Naive thymus-derived CD4-positive, alpha-beta T cell (primary cell): ENCODE measurements at regions of chr14 and their contacts with region 1.

Region 1: GRCh38 chr14:69715725-69716477 is 51.0 kb upstream of the SRSF5 start:
- DNase-seq: no peak
- ATAC-seq: peak; percentile 29
- H3K4me3 ChIP-seq: no peak overlapping the region
- H3K4me3 Mint-ChIP-seq: peak overlapping the region in 2 of 10 donors; percentile 18 to 72
- H3K27ac ChIP-seq: no peak overlapping the region
- H3K27ac Mint-ChIP-seq: peak overlapping the region in 8 of 9 donors; percentile 9 to 88 (median 50)
- H3K4me1 ChIP-seq: peaks cover 12 to 14% of the 10 kb centered on the region in 2 donors
- H3K4me1 Mint-ChIP-seq: peaks cover 27 to 80% (median 37%) of the 10 kb centered on the region in 7 donors
- H3K27me3 ChIP-seq: no peaks in the 10 kb centered on the region
- H3K27me3 Mint-ChIP-seq: no peaks in the 10 kb centered on the region

Region 2: GRCh38 chr14:69685716-69686115 is 30.2 kb before region 1 on chr14:
- CTCF ChIA-PET with region 1: interaction called, 5 read pairs
- POLR2A ChIA-PET with region 1: no interaction called
- intact Hi-C with region 1: loop called in 1 of 2 experiments (anchors 2 kb)
- DNase-seq: peak in 1 of 9 donors; percentile 38
- ATAC-seq: peak; percentile 34
- H3K4me3 ChIP-seq: no peak overlapping the region
- H3K4me3 Mint-ChIP-seq: peak overlapping the region in 3 of 10 donors; percentile 1 to 78 (median 39)
- H3K27ac ChIP-seq: no peak overlapping the region
- H3K27ac Mint-ChIP-seq: peak overlapping the region in 5 of 9 donors; percentile 14 to 82 (median 57)
- H3K4me1 ChIP-seq: peaks cover 27 to 28% of the 10 kb centered on the region in 2 donors
- H3K4me1 Mint-ChIP-seq: peaks cover 71 to 83% (median 81%) of the 10 kb centered on the region in 7 donors
- H3K27me3 ChIP-seq: no peaks in the 10 kb centered on the region
- H3K27me3 Mint-ChIP-seq: no peaks in the 10 kb centered on the region

Region 3: DNA sequence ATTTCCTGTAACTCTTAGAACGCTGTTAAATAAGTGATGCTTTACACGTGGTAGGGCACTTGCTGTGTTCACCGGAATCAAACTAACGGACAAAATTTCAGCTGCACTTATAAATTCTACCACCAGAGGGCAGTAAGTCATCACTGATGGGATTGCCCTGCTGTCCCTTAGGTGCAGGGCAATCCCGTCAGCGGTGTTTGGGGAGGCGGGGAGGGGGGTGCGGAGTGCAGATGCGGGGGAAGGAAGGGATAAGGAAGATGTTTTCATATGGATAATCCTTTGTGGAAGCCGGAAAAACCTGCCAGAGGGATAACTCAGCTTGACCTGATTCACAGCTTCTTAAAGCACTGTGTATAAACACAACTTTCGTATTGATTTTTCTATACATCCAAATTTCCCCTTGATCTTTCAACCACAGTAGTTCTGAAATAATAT is 102.9 kb after region 1 on chr14:
- CTCF ChIA-PET with region 1: no interaction called
- POLR2A ChIA-PET with region 1: no interaction called
- intact Hi-C with region 1: no loop called
- DNase-seq: peak; percentile 16 to 76 (median 53)
- ATAC-seq: peak; percentile 84
- H3K4me3 ChIP-seq: no peak overlapping the region
- H3K4me3 Mint-ChIP-seq: no peak overlapping the region
- H3K27ac ChIP-seq: no peak overlapping the region
- H3K27ac Mint-ChIP-seq: no peak overlapping the region
- H3K4me1 ChIP-seq: no peaks in the 10 kb centered on the region
- H3K4me1 Mint-ChIP-seq: peaks cover 0 to 4% (median 3%) of the 10 kb centered on the region in 7 donors
- H3K27me3 ChIP-seq: no peaks in the 10 kb centered on the region
- H3K27me3 Mint-ChIP-seq: peaks cover 0 to 8% (median 4%) of the 10 kb centered on the region in 5 donors